ENCODE measurements at regions of chr7 and their contacts with region 1.

Region 1: GRCh38 chr7:24381894-24382505 is 98.0 kb downstream of the NPY start:
- DNase-seq: no peak
- ATAC-seq: peak; percentile 94
- H3K4me3 ChIP-seq: no peak overlapping the region
- H3K27ac ChIP-seq: no peak overlapping the region
- H3K4me1 ChIP-seq: peaks cover 3% of the 10 kb centered on the region
- H3K27me3 ChIP-seq: no peaks in the 10 kb centered on the region
- CTCF ChIP-seq: peak; percentile 56 to 65 (median 57)
- EP300 ChIP-seq: no peak
- POLR2A ChIP-seq: no peak
- RAD21 ChIP-seq: peak; percentile 85

Region 2: GRCh38 chr7:23863209-23863798 is 518.7 kb before region 1 on chr7:
- CTCF ChIA-PET with region 1: interaction called, 15 read pairs
- POLR2A ChIA-PET with region 1: no interaction called
- RAD21 ChIA-PET with region 1: interaction called, 6 read pairs
- SMC1A ChIA-PET with region 1: interaction called, 8 read pairs
- in situ Hi-C with region 1: no loop called
- intact Hi-C with region 1: loop called (anchors 10 kb)
- DNase-seq: no peak
- ATAC-seq: peak; percentile 55; the same call in 2 of the 3 replicates
- H3K4me3 ChIP-seq: no peak overlapping the region
- H3K27ac ChIP-seq: no peak overlapping the region
- H3K4me1 ChIP-seq: no peaks in the 10 kb centered on the region
- H3K27me3 ChIP-seq: no peaks in the 10 kb centered on the region
- CTCF ChIP-seq: peak; percentile 53 to 63 (median 62)
- EP300 ChIP-seq: no peak
- POLR2A ChIP-seq: no peak
- RAD21 ChIP-seq: peak; percentile 85

Region 3: DNA sequence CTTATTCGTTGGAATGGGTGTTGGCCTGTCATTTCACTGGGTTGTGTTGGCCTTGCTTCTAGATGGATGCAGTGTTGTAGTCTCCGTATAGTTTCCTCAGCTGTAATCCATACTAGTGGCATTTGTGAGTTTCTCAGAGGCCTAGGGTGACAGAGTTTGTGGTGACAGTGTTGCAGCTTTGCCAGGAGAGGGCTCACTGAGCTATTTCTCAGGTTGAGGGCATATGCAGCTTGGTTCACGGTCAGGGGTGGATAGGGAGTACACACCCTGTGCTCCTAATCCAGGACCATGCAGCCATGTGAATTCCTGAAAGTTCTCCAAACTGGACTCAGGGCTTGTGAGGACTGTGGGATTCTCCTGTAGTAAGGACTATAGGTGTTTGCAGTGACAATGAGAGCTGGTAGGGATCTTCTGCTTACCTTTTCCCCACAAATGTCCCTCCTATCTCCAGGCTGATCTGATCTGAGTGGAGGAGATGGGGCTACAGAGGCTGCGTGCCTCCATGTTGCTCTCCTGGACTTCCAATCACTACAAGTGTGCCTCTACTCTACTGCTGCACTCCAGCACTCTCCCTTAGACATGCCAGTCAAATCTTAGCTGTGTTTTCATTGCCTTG is 443.0 kb before region 1 on chr7:
- CTCF ChIA-PET with region 1: interaction called, 26 read pairs
- POLR2A ChIA-PET with region 1: no interaction called
- RAD21 ChIA-PET with region 1: interaction called, 12 read pairs
- SMC1A ChIA-PET with region 1: interaction called, 7 read pairs
- in situ Hi-C with region 1: no loop called
- intact Hi-C with region 1: loop called (anchors 1 kb)
- DNase-seq: no peak
- ATAC-seq: peak; percentile 94
- H3K4me3 ChIP-seq: no peak overlapping the region
- H3K27ac ChIP-seq: no peak overlapping the region
- H3K4me1 ChIP-seq: no peaks in the 10 kb centered on the region
- H3K27me3 ChIP-seq: no peaks in the 10 kb centered on the region
- CTCF ChIP-seq: peak; percentile 51 to 60 (median 58); a peak in 5 of 6 replicates
- EP300 ChIP-seq: no peak
- POLR2A ChIP-seq: no peak
- RAD21 ChIP-seq: peak; percentile 62

Region 4: DNA sequence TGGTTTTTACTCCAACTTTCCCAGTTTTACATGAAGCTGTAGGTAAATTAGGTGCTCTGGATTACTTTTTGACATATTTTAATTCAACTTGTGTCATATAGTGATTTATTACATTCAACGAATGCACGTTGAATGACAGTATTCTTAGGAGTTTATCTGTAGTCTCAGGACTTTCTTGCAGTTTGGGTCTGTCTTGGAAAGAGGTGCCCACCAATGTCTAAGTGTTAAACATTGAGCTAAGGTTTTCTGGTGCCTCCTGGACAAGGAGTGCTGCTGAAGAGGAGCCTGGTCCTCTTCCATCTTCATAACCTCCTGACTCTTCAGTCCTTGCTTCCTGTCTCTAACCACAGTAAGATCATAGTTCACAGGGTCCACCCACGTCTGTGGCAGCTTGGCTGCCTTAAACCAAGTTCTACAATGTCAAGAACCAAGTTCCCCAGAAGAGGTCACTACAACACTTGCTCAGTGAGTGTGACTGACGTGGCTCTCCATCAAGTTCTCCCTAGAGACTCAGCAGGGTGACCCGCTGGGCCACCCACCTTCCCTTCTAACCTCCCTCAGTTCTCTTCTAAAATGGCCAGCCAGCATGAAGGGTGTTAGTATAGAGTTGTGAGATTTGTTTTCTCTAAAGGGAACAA is 91.9 kb before region 1 on chr7:
- CTCF ChIA-PET with region 1: interaction called, 31 read pairs
- POLR2A ChIA-PET with region 1: no interaction called
- RAD21 ChIA-PET with region 1: interaction called, 21 read pairs
- SMC1A ChIA-PET with region 1: interaction called, 14 read pairs
- in situ Hi-C with region 1: loop called (anchors 5 kb)
- intact Hi-C with region 1: loop called (anchors 1 kb)
- DNase-seq: peak; percentile 70
- ATAC-seq: peak; percentile 99
- H3K4me3 ChIP-seq: no peak overlapping the region
- H3K27ac ChIP-seq: no peak overlapping the region
- H3K4me1 ChIP-seq: 0 out of 2 replicates have a peak, but pooled peaks cover 2% of the 10 kb centered on the region
- H3K27me3 ChIP-seq: peaks cover 7% of the 10 kb centered on the region in 2 experiments
- CTCF ChIP-seq: peak; percentile 63 to 76 (median 71)
- EP300 ChIP-seq: no peak
- POLR2A ChIP-seq: no peak
- RAD21 ChIP-seq: peak; percentile 90

Region 5: GRCh38 chr7:24299192-24299591 is 82.8 kb before region 1 on chr7:
- CTCF ChIA-PET with region 1: interaction called, 4 read pairs
- POLR2A ChIA-PET with region 1: no interaction called
- RAD21 ChIA-PET with region 1: interaction called, 3 read pairs
- SMC1A ChIA-PET with region 1: interaction called, 11 read pairs
- in situ Hi-C with region 1: loop called (anchors 5 kb)
- intact Hi-C with region 1: no loop called
- DNase-seq: no peak
- ATAC-seq: no peak
- H3K4me3 ChIP-seq: no peak overlapping the region
- H3K27ac ChIP-seq: no peak overlapping the region
- H3K4me1 ChIP-seq: no peaks in the 10 kb centered on the region
- H3K27me3 ChIP-seq: no peaks in the 10 kb centered on the region
- CTCF ChIP-seq: no peak
- EP300 ChIP-seq: no peak
- POLR2A ChIP-seq: no peak
- RAD21 ChIP-seq: no peak

Region 6: GRCh38 chr7:24318326-24318725 is 63.7 kb before region 1 on chr7:
- CTCF ChIA-PET with region 1: interaction called, 32 read pairs
- POLR2A ChIA-PET with region 1: no interaction called
- RAD21 ChIA-PET with region 1: interaction called, 28 read pairs
- SMC1A ChIA-PET with region 1: interaction called, 21 read pairs
- in situ Hi-C with region 1: no loop called
- intact Hi-C with region 1: loop called (anchors 1 kb)
- DNase-seq: no peak
- ATAC-seq: peak; percentile 86
- H3K4me3 ChIP-seq: no peak overlapping the region
- H3K27ac ChIP-seq: no peak overlapping the region
- H3K4me1 ChIP-seq: no peaks in the 10 kb centered on the region
- H3K27me3 ChIP-seq: no peaks in the 10 kb centered on the region
- CTCF ChIP-seq: peak; percentile 56 to 69 (median 66)
- EP300 ChIP-seq: no peak
- POLR2A ChIP-seq: no peak
- RAD21 ChIP-seq: peak; percentile 87

Region 7: DNA sequence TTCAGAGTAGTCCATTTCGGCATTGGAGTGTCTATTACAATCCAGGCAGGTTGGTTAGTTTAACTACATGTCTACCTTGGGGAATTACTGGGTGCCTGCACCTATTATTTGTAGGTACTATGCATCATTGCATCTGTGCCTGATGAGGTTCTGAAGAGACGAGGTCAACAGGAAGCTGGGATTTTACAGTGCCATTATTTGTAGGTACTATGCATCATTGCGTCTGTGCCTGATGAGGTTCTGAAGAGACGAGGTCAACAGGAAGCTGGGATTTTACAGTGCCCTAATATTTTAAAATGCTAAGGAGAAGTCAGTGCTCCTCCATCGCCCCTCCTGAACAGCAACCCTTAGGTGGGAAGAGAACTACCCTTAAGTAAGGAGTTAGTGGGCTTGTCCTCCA is 56.3 kb before region 1 on chr7:
- CTCF ChIA-PET with region 1: interaction called, 32 read pairs
- POLR2A ChIA-PET with region 1: no interaction called
- RAD21 ChIA-PET with region 1: interaction called, 5 read pairs
- SMC1A ChIA-PET with region 1: interaction called, 5 read pairs
- in situ Hi-C with region 1: no loop called
- intact Hi-C with region 1: no loop called
- DNase-seq: peak; percentile 75
- ATAC-seq: peak; percentile 95
- H3K4me3 ChIP-seq: peak overlapping the region; percentile 45
- H3K27ac ChIP-seq: peak overlapping the region; percentile 83
- H3K4me1 ChIP-seq: peaks cover 11% of the 10 kb centered on the region
- H3K27me3 ChIP-seq: no peaks in the 10 kb centered on the region
- CTCF ChIP-seq: no peak
- EP300 ChIP-seq: 0 out of 4 replicates have a peak, but pooled peaks of 1 of the 2 experiments have one; percentile 23
- POLR2A ChIP-seq: no peak
- RAD21 ChIP-seq: no peak

Measured in GM12878 (cell line).